Naive thymus-derived CD8-positive, alpha-beta T cell (primary cell): ENCODE measurements at regions of chr20 and their contacts with region 1.

Region 1: GRCh38 chr20:41161886-41162285 is 24.5 kb downstream of the PLCG1 start:
- DNase-seq: peak in 1 of 10 donors; percentile 26
- ATAC-seq: peak in 1 of 2 donors; percentile 15
- H3K4me3 Mint-ChIP-seq: peak overlapping the region; percentile 31 to 84 (median 75)
- H3K27ac Mint-ChIP-seq: peak overlapping the region; percentile 93 to 99 (median 95)
- H3K4me1 Mint-ChIP-seq: peaks cover 56 to 94% (median 84%) of the 10 kb centered on the region in 4 donors
- H3K27me3 Mint-ChIP-seq: peaks cover 0 to 2% (median 0%) of the 10 kb centered on the region in 5 donors

Region 2: GRCh38 chr20:41173161-41173721 is 11.4 kb after region 1 on chr20:
- POLR2A ChIA-PET with region 1: interaction called, 83 read pairs
- DNase-seq: peak; percentile 47 to 82 (median 68)
- ATAC-seq: peak; percentile 90 to 94
- H3K4me3 Mint-ChIP-seq: peak overlapping the region in 2 of 10 donors; percentile 11 to 26
- H3K27ac Mint-ChIP-seq: peak overlapping the region; percentile 34 to 94 (median 90)
- H3K4me1 Mint-ChIP-seq: peaks cover 24 to 57% (median 43%) of the 10 kb centered on the region in 4 donors
- H3K27me3 Mint-ChIP-seq: peaks cover 0 to 2% (median 0%) of the 10 kb centered on the region in 5 donors